ENCODE measurements at regions of chr15 and their contacts with region 1.

Region 1: GRCh38 chr15:73760330-73761329 is 7.5 kb upstream of the INSYN1 start:
- DNase-seq: no peak
- H3K4me3 ChIP-seq: no peak overlapping the region
- H3K27ac ChIP-seq: no peak overlapping the region
- H3K4me1 ChIP-seq: no peaks in the 10 kb centered on the region
- H3K27me3 ChIP-seq: no peaks in the 10 kb centered on the region; a peak in 2 of 7 replicates
- CTCF ChIP-seq: no peak
- EP300 ChIP-seq: no peak
- POLR2A ChIP-seq: no peak
- RAD21 ChIP-seq: no peak

Region 2: DNA sequence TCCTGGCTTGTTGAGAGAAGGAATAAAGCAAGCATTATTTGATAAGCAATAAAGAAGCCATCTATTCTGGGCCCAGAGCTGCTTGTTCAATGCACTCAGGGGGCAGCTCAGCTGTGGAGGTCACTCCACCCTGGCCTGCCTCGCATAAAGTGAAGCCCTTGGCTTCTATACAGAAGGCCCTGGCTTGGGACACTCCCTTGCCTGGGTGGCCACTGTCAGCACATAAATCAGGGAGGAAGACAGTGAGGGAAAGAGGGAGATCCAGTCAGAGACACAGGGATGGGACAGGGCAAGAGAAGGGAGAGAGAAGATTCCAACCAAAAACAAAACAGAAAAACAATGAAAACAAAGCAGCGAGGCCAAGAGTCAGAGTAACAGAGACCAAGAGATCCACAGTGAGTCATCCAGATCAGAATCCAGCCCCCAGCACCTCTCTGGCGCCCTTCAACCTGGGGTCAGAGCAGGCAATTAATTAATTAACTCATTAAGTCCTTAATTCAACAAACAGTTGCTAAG is 19.3 kb before region 1 on chr15:
- CTCF ChIA-PET with region 1: no interaction called
- POLR2A ChIA-PET with region 1: no interaction called
- DNase-seq: no peak
- H3K4me3 ChIP-seq: no peak overlapping the region
- H3K27ac ChIP-seq: no peak overlapping the region
- H3K4me1 ChIP-seq: peaks cover 5 to 12% (median 8%) of the 10 kb centered on the region in 4 experiments; a peak in 6 of 7 replicates
- H3K27me3 ChIP-seq: no peaks in the 10 kb centered on the region
- CTCF ChIP-seq: no peak
- EP300 ChIP-seq: no peak
- POLR2A ChIP-seq: no peak
- RAD21 ChIP-seq: no peak

Region 3: DNA sequence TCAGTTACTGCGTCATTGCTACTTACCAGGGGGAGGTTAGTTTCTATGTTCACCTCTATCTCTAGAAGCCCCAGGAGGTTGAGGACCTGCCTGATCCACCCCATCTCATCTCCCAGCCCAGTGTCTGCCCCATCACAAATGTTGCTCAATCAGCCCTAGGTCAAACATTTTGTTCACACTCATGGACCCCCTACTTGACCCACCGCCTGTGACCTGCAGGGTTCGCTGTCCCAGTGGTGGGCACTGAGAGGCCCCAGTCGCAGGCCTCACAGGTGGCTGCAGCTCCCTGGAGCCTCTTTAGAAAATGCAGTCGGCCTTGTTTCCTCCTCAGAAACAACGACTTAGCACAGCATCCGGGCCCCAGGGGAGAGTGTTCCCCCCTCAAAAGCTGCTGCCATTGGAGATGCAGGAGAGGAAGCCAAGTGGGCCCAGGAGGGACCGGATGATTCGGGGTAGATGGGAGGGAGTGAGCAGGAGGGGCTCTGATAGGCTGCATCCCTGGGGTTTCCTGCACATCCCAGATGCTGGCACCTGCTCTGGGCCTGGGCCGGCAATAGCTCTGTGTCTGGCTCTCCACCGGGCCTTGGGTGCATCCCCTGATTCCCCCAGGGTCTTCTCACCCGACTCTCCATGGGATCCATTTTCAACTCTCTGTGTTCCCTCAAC is 10.9 kb after region 1 on chr15:
- CTCF ChIA-PET with region 1: interaction called, 14 read pairs
- POLR2A ChIA-PET with region 1: no interaction called
- DNase-seq: no peak
- H3K4me3 ChIP-seq: no peak overlapping the region
- H3K27ac ChIP-seq: no peak overlapping the region
- H3K4me1 ChIP-seq: peaks cover 0 to 12% (median 3%) of the 10 kb centered on the region in 4 experiments; a peak in 3 of 7 replicates
- H3K27me3 ChIP-seq: no peaks in the 10 kb centered on the region
- CTCF ChIP-seq: peak; percentile 42 to 64 (median 52); a peak in 3 of 4 replicates
- EP300 ChIP-seq: no peak
- POLR2A ChIP-seq: no peak
- RAD21 ChIP-seq: peak; percentile 19 to 51; a peak in 2 of 4 replicates

Measured in H1 (cell line).